B cell (primary cell): ENCODE measurements at regions of chr20 and their contacts with region 1.

Region 1: DNA sequence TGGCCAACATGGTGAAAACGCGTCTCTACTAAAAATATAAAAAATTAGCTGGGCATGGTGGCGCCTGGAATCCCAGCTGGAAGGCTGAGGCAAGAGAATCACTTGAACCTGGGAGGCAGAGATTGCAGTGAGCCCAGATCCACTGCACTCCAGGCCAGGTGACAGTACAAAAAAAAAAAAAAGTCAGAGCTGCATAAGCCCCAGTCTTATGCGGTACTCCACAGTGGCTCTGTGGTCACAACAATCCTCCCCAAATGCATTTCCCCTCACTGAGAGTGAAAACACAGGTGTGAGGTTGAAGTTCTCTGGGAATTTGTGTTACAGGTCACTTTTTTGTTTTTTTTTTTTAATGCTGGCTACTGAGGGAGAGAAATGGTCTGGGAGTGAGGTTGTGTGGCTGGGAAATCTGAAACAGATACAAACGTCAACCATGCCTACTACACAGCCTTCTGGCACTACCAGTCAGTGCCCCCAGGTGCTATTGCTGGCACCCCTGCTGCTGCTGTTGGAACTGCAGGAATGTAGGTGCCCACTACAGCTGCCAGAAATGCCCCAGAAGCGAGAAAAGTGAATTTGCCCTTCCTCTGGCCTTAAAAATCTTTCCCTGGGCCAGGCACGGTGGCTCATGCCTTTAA is 5.7 kb downstream of the MRPS26 start:
- DNase-seq: no peak
- ATAC-seq: no peak
- H3K4me3 ChIP-seq: no peak overlapping the region
- H3K4me3 Mint-ChIP-seq: no peak overlapping the region
- H3K27ac ChIP-seq: no peak overlapping the region
- H3K27ac Mint-ChIP-seq: no peak overlapping the region
- H3K4me1 ChIP-seq: peaks cover 6 to 7% of the 10 kb centered on the region in 2 donors
- H3K4me1 Mint-ChIP-seq: peaks cover 7% of the 10 kb centered on the region
- H3K27me3 ChIP-seq: no peaks in the 10 kb centered on the region
- H3K27me3 Mint-ChIP-seq: no peaks in the 10 kb centered on the region
- CTCF ChIP-seq: no peak

Region 2: DNA sequence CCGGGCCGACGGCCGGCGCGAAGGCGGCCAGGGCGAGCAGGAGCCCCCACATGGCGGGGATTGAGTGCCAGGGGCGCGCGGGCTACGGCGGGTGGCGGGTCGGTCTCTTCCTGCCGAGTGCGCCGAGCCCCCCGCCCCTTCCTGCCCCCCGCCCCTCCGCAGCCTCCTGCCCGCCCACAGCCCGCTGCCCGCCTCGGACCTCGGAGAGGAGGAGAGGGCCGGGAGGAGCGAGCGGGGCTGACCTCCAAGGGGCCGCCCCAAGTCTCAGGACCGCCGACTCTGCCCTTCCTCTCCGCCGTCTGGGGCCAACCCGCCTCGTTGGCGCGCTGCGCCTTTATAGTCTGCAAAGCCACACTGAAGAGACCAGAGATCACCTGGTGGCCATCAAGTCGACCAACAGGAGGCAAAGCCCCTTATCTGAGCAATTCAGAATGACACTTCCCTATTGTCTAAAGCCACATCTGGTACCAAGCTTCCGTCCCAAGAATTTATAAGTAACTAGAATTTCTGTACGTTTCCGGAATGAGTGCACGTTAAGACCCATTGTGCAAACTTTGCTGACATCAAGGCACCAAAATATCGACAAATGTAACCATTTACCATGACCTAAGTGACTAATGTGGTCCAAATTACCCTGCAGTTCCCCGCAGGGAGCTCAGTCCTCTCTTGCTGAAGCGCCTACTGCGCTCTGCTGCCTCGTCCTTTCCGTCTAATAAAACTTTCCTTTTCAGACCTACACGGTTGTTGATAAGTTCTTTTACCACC is 250.8 kb before region 1 on chr20 and contains the start of gene CPXM1:
- CTCF ChIA-PET with region 1: no interaction called
- POLR2A ChIA-PET with region 1: no interaction called
- intact Hi-C with region 1: no loop called
- DNase-seq: peak; percentile 33
- ATAC-seq: peak; percentile 44
- H3K4me3 ChIP-seq: peak within 1 kb of the TSS; percentile 15 to 50 (median 41)
- H3K4me3 Mint-ChIP-seq: peak within 1 kb of the TSS; percentile 95
- H3K27ac ChIP-seq: no peak within 1 kb of the TSS
- H3K27ac Mint-ChIP-seq: peak within 1 kb of the TSS; percentile 71
- H3K4me1 ChIP-seq: peaks cover 22 to 26% of the 10 kb centered on the region in 2 donors
- H3K4me1 Mint-ChIP-seq: peaks cover 32% of the 10 kb centered on the region
- H3K27me3 ChIP-seq: peaks cover 0 to 55% (median 12%) of the 10 kb centered on the region in 4 experiments
- H3K27me3 Mint-ChIP-seq: peaks cover 61% of the 10 kb centered on the region
- CTCF ChIP-seq: no peak
- total RNA-seq, gene CPXM1: 1.6 and 1.9 TPM in 2 replicates

Region 3: GRCh38 chr20:3077618-3078134 is 26.2 kb after region 1 on chr20:
- CTCF ChIA-PET with region 1: interaction called, 18 read pairs
- POLR2A ChIA-PET with region 1: no interaction called
- intact Hi-C with region 1: loop called (anchors 1 kb)
- DNase-seq: no peak
- ATAC-seq: no peak
- H3K4me3 ChIP-seq: no peak overlapping the region
- H3K4me3 Mint-ChIP-seq: no peak overlapping the region
- H3K27ac ChIP-seq: no peak overlapping the region
- H3K27ac Mint-ChIP-seq: no peak overlapping the region
- H3K4me1 ChIP-seq: peaks cover 9 to 12% of the 10 kb centered on the region in 2 donors
- H3K4me1 Mint-ChIP-seq: peaks cover 11% of the 10 kb centered on the region
- H3K27me3 ChIP-seq: peaks cover 0 to 44% (median 18%) of the 10 kb centered on the region in 4 experiments
- H3K27me3 Mint-ChIP-seq: peaks cover 39% of the 10 kb centered on the region
- CTCF ChIP-seq: no peak

Region 4: GRCh38 chr20:3115190-3116107 is 63.9 kb after region 1 on chr20:
- CTCF ChIA-PET with region 1: interaction called, 68 read pairs
- POLR2A ChIA-PET with region 1: no interaction called
- intact Hi-C with region 1: no loop called
- DNase-seq: peak; percentile 73
- ATAC-seq: peak; percentile 69
- H3K4me3 ChIP-seq: no peak overlapping the region
- H3K4me3 Mint-ChIP-seq: no peak overlapping the region
- H3K27ac ChIP-seq: no peak overlapping the region
- H3K27ac Mint-ChIP-seq: no peak overlapping the region
- H3K4me1 ChIP-seq: peaks cover 0 to 4% of the 10 kb centered on the region in 2 donors
- H3K4me1 Mint-ChIP-seq: peaks cover 9% of the 10 kb centered on the region
- H3K27me3 ChIP-seq: no peaks in the 10 kb centered on the region
- H3K27me3 Mint-ChIP-seq: no peaks in the 10 kb centered on the region
- CTCF ChIP-seq: peak; percentile 85

Region 5: DNA sequence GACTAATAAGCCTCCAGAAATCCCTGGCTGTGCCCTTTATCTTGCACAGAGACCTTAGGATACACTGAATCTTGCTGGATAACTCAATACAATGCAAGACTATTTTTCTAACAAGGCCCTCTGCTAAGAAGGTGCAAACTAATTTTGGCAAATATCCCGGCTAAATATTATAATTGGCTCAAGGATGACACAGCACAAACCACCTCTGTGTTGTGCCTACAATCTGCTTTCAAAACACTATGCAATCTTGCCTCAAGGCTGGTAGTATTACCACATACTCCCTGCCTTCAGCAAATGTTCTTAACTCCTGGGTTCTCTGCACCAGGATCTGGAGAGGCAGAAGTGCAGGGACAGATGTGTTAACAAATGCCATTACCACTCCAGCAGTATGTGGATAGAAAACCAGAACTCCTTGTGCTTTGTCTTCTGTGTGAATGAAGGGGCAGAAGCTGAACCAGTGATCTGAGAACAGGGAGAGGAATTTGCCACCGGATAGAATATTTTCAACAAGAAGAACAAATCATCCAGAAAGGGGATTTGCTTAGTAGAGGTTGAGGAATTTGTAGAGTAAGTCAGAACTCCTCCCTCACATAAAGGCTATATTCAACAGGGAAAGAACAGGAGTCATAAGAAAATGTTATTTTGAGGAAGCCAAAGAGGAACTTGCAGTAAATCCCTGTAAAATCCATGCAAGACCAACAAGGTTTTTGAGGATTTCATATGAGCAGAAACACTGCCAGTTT is 261.6 kb after region 1 on chr20:
- CTCF ChIA-PET with region 1: interaction called, 39 read pairs
- POLR2A ChIA-PET with region 1: no interaction called
- intact Hi-C with region 1: no loop called
- DNase-seq: no peak
- ATAC-seq: no peak
- H3K4me3 ChIP-seq: no peak overlapping the region
- H3K4me3 Mint-ChIP-seq: no peak overlapping the region
- H3K27ac ChIP-seq: no peak overlapping the region
- H3K27ac Mint-ChIP-seq: no peak overlapping the region
- H3K4me1 ChIP-seq: no peaks in the 10 kb centered on the region
- H3K4me1 Mint-ChIP-seq: no peaks in the 10 kb centered on the region
- H3K27me3 ChIP-seq: no peaks in the 10 kb centered on the region
- H3K27me3 Mint-ChIP-seq: no peaks in the 10 kb centered on the region
- CTCF ChIP-seq: no peak